ENCODE measurements at regions of chr6 and their contacts with region 1.

Region 1: GRCh38 chr6:79040083-79040482 is 38.0 kb downstream of the PHIP start:
- DNase-seq: no peak
- H3K4me3 Mint-ChIP-seq: no peak overlapping the region
- H3K27ac Mint-ChIP-seq: no peak overlapping the region
- H3K4me1 Mint-ChIP-seq: peaks cover 66% of the 10 kb centered on the region
- H3K27me3 Mint-ChIP-seq: no peaks in the 10 kb centered on the region

Region 2: GRCh38 chr6:78961513-78961912 is 78.6 kb before region 1 on chr6:
- CTCF ChIA-PET with region 1: no interaction called
- POLR2A ChIA-PET with region 1: no interaction called
- intact Hi-C with region 1: no loop called
- DNase-seq: no peak
- H3K4me3 Mint-ChIP-seq: no peak overlapping the region
- H3K27ac Mint-ChIP-seq: no peak overlapping the region
- H3K4me1 Mint-ChIP-seq: no peaks in the 10 kb centered on the region
- H3K27me3 Mint-ChIP-seq: no peaks in the 10 kb centered on the region

Region 3: DNA sequence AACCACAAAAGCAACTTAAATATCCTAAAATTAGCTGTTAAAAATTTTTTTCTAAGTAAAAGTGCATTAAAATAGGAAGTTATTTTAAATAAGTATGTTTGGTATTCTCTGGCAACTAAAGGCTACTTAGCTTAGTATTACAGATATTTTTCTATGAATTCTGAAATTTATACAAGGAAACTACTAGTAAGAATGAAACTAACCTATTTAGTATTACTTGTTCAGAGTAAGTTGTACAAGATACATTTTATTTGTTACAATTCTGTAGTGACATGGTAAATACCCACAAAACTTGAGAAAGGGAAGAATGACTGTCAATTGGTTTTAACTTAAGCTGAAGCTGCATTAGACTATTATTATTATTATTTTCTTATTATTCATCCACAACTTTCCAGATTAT is 31.5 kb after region 1 on chr6:
- CTCF ChIA-PET with region 1: no interaction called
- POLR2A ChIA-PET with region 1: interaction called, 6 read pairs
- intact Hi-C with region 1: loop called (anchors 1 kb)
- DNase-seq: no peak
- H3K4me3 Mint-ChIP-seq: no peak overlapping the region
- H3K27ac Mint-ChIP-seq: no peak overlapping the region
- H3K4me1 Mint-ChIP-seq: peaks cover 60% of the 10 kb centered on the region
- H3K27me3 Mint-ChIP-seq: no peaks in the 10 kb centered on the region

Region 4: DNA sequence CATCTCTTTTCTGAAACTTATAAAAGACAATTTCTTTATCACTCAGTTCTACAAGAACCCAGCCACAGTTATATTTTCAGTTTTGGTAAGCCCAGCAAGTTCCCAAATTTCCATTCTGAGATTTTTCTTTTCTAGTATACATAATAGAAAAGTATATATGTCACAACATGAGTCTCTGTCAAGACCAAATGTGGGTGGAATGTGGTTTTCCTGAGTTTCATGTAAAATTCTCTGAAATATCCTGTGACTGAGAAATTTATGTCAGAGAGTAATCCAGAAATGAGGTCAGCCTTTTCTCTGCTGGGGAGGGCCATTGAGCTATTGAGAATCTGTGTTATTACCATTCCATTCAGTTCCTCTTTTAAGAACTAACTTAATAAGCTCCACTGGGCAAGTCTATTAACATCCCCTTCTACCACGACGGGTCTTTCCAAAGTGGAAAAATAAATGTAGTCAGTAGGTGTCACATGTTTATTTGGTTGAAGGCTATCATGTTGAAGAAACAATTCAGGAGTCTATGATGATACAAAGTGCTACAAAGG is 295.1 kb after region 1 on chr6:
- CTCF ChIA-PET with region 1: no interaction called
- POLR2A ChIA-PET with region 1: no interaction called
- intact Hi-C with region 1: loop called (anchors 1 kb)
- DNase-seq: no peak
- H3K4me3 Mint-ChIP-seq: no peak overlapping the region
- H3K27ac Mint-ChIP-seq: no peak overlapping the region
- H3K4me1 Mint-ChIP-seq: peaks cover 7% of the 10 kb centered on the region
- H3K27me3 Mint-ChIP-seq: peaks cover 20% of the 10 kb centered on the region

Measured in activated CD4-positive, alpha-beta memory T cell treated with anti-CD3 and anti-CD28 coated beads for 36 hours (primary cell).